Natural killer cell (primary cell): ENCODE measurements at regions of chr10 and their contacts with region 1.

Region 1: DNA sequence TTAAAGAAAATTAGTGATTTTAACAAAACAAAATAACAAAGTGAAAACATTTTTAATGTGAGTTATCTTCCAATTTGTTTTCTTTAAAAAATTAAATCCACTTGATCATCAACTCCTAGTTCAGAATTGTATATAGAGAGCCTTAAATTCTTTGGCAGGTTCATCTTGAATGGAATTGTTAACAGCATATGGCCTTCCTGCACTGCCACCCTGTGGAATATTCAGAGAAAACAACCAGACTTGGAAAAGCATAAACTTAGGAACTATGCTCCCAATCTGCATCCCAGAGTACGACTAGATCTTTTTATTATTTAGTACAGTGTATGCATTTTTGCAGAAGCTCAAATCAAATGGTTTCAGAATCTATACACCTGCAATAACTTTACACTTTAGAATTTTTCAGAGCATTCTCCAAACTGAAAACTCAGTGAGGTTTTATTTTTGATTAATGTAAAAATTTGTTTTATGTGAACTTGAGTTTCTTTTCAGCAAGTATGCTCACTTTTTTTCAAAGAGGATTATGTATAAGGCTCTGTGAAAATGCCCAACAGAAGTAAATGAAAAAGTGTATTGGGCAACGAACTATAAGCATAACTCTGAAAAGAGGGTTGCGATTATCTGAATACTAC is 44.9 kb upstream of the ANK3 start:
- DNase-seq: peak in 1 of 2 donors; percentile 32
- ATAC-seq: no peak
- H3K4me3 ChIP-seq: no peak overlapping the region
- H3K4me3 Mint-ChIP-seq: no peak overlapping the region
- H3K27ac ChIP-seq: no peak overlapping the region
- H3K27ac Mint-ChIP-seq: no peak overlapping the region
- H3K4me1 ChIP-seq: no peaks in the 10 kb centered on the region
- H3K4me1 Mint-ChIP-seq: no peaks in the 10 kb centered on the region
- H3K27me3 ChIP-seq: no peaks in the 10 kb centered on the region
- H3K27me3 Mint-ChIP-seq: no peaks in the 10 kb centered on the region
- CTCF ChIP-seq: peak; percentile 27

Region 2: GRCh38 chr10:60208676-60209269 is 225.8 kb before region 1 on chr10:
- intact Hi-C with region 1: loop called (anchors 2 kb)
- DNase-seq: no peak
- ATAC-seq: no peak
- H3K4me3 ChIP-seq: no peak overlapping the region
- H3K4me3 Mint-ChIP-seq: no peak overlapping the region
- H3K27ac ChIP-seq: no peak overlapping the region
- H3K27ac Mint-ChIP-seq: no peak overlapping the region
- H3K4me1 ChIP-seq: no peaks in the 10 kb centered on the region
- H3K4me1 Mint-ChIP-seq: peaks cover 0 to 6% of the 10 kb centered on the region in 2 donors
- H3K27me3 ChIP-seq: no peaks in the 10 kb centered on the region
- H3K27me3 Mint-ChIP-seq: peaks cover 0 to 3% of the 10 kb centered on the region in 2 donors
- CTCF ChIP-seq: no peak

Region 3: GRCh38 chr10:60282771-60283353 is 151.7 kb before region 1 on chr10:
- intact Hi-C with region 1: no loop called
- DNase-seq: no peak
- ATAC-seq: peak in 1 of 3 donors; percentile 35
- H3K4me3 ChIP-seq: no peak overlapping the region
- H3K4me3 Mint-ChIP-seq: no peak overlapping the region
- H3K27ac ChIP-seq: no peak overlapping the region
- H3K27ac Mint-ChIP-seq: no peak overlapping the region
- H3K4me1 ChIP-seq: no peaks in the 10 kb centered on the region
- H3K4me1 Mint-ChIP-seq: no peaks in the 10 kb centered on the region
- H3K27me3 ChIP-seq: no peaks in the 10 kb centered on the region
- H3K27me3 Mint-ChIP-seq: no peaks in the 10 kb centered on the region
- CTCF ChIP-seq: no peak

Region 4: GRCh38 chr10:60456053-60456452 is 21.5 kb after region 1 on chr10:
- intact Hi-C with region 1: no loop called
- DNase-seq: no peak
- ATAC-seq: no peak
- H3K4me3 ChIP-seq: no peak overlapping the region
- H3K4me3 Mint-ChIP-seq: no peak overlapping the region
- H3K27ac ChIP-seq: no peak overlapping the region
- H3K27ac Mint-ChIP-seq: no peak overlapping the region
- H3K4me1 ChIP-seq: no peaks in the 10 kb centered on the region
- H3K4me1 Mint-ChIP-seq: no peaks in the 10 kb centered on the region
- H3K27me3 ChIP-seq: no peaks in the 10 kb centered on the region
- H3K27me3 Mint-ChIP-seq: no peaks in the 10 kb centered on the region
- CTCF ChIP-seq: no peak

Region 5: DNA sequence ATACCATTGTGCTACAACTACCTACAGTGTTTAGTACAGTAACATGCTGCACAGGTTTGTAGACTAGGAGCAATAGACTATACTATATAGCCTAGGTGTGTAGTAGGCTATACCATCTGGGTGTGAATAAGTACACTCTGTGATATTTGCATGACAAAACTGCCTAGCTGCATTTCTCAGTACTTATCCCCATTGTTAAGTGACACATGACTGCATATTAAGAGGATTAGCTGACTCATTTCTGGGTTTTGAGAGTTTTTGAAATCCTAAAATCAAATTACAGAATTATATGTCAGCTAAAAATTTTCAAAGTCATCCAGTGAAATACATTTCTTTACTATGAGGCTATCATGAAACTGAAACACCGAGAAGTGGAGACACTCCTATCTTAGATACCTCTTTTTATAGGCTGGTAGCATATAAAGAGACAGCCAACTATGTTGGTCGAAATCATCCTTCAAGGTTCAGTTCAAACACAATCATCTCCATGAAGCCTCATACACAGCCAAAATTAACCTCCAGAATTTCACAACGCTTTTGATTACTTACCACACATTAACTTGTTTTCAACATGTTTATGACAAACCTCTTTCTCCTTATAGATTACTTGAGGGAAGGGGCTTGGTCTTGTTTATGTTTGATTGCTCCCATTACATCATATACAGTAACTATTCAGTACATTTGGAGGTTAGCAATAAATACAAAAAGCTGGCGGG is 44.9 kb after region 1 on chr10:
- intact Hi-C with region 1: no loop called
- DNase-seq: no peak
- ATAC-seq: no peak
- H3K4me3 ChIP-seq: no peak overlapping the region
- H3K4me3 Mint-ChIP-seq: no peak overlapping the region
- H3K27ac ChIP-seq: no peak overlapping the region
- H3K27ac Mint-ChIP-seq: no peak overlapping the region
- H3K4me1 ChIP-seq: no peaks in the 10 kb centered on the region
- H3K4me1 Mint-ChIP-seq: no peaks in the 10 kb centered on the region
- H3K27me3 ChIP-seq: no peaks in the 10 kb centered on the region
- H3K27me3 Mint-ChIP-seq: no peaks in the 10 kb centered on the region
- CTCF ChIP-seq: no peak

Region 6: DNA sequence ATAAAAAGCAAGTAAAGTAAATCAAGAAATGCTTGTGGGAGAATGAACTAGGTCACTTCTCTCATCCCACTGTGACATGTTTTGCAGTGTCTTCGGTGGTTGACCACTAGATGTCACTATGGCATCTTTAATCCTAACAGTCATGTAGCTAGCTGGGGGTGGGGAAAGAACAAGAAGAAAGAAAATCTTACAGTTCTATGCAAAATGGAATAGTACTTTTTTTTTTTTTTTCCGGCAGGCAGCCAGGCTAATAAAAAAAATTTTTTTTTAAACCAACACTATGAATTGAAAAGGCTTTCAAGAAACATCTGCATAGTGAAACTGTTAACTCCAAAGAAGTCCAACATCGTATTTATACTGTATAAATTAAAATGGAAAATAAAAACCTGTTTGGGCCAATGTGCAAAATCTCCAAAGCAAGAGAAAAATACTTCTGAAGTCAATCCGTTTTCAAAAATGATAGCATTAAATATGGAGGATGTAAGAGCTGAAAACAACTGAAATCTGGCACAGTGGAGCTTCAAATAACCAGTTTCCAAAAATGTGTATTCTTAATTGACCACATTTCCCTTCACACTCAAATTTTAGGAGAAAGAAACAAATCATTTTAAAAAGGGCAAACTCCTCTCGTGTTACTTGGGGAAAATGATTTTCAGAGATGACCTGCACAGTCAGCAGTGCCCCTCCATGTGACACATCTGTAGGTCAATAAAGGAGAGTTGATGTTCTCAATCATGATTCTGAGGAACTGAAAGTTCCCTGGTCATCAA is 382.3 kb after region 1 on chr10:
- intact Hi-C with region 1: no loop called
- DNase-seq: peak in 1 of 2 donors; percentile 77
- ATAC-seq: peak; percentile 64 to 85 (median 82)
- H3K4me3 ChIP-seq: no peak overlapping the region
- H3K4me3 Mint-ChIP-seq: no peak overlapping the region
- H3K27ac ChIP-seq: no peak overlapping the region
- H3K27ac Mint-ChIP-seq: no peak overlapping the region
- H3K4me1 ChIP-seq: no peaks in the 10 kb centered on the region
- H3K4me1 Mint-ChIP-seq: peaks cover 12 to 22% of the 10 kb centered on the region in 2 donors
- H3K27me3 ChIP-seq: no peaks in the 10 kb centered on the region
- H3K27me3 Mint-ChIP-seq: no peaks in the 10 kb centered on the region
- CTCF ChIP-seq: peak; percentile 75